HAP-1 (cell line): ENCODE measurements at regions of chr2 and their contacts with region 1.

Region 1: DNA sequence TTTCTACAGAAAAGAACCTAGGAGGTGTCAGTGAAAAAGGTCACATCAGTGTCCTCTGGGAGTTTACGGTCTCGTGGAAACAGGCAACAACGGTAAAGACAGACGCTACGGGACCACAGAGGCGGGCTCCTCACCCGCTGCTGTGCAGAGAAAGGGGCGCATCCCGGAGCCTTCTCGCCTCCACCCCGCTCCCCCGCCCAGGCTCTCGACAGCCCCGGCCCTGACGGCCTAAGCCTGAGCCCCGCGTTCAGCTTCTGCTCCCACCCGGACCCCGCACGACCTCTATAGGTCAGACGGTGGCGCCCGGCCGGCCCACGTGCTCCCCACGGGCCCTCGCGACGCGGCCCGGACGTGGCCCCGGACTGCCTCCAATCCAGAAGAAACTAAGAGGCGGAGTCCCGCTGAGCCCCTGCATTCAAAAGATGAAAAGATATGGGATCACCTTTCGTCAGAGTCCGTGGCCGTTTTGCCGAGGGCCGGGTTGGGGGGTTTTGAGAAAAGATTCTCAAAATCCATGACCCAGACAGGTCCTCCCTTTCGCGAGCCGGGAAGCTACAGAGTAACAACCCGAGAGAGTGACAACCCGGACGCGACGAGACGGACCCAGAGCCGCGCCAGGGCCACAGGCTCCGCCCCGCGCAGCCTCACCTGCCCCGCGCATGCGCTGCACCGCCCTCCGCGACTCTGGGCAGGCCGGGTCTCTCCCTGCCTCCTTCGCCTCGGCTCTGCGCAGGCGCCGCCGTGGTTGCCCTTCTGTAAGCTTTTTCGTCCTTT is at the start of gene ZC3H8:
- DNase-seq: peak; percentile 88 to 95
- H3K4me3 ChIP-seq: peak within 1 kb of the TSS; percentile 65
- H3K4me1 ChIP-seq: peaks cover 18% of the 10 kb centered on the region
- H3K27me3 ChIP-seq: no peaks in the 10 kb centered on the region

Region 2: GRCh38 chr2:111883661-111884591 is 370.7 kb before region 1 on chr2 and contains the start of gene ANAPC1:
- in situ Hi-C with region 1: loop called (anchors 25 kb)
- DNase-seq: peak; percentile 80 to 91
- H3K4me3 ChIP-seq: peak within 1 kb of the TSS; percentile 99
- H3K4me1 ChIP-seq: peaks cover 12% of the 10 kb centered on the region
- H3K27me3 ChIP-seq: no peaks in the 10 kb centered on the region

Region 3: GRCh38 chr2:112065966-112066365 is 188.7 kb before region 1 on chr2:
- in situ Hi-C with region 1: no loop called
- DNase-seq: no peak
- H3K4me3 ChIP-seq: no peak overlapping the region
- H3K4me1 ChIP-seq: no peaks in the 10 kb centered on the region
- H3K27me3 ChIP-seq: no peaks in the 10 kb centered on the region